Right ventricle myocardium inferior (tissue), 1 donor: ENCODE measurements at regions of chr11 and their contacts with region 1.

Region 1: DNA sequence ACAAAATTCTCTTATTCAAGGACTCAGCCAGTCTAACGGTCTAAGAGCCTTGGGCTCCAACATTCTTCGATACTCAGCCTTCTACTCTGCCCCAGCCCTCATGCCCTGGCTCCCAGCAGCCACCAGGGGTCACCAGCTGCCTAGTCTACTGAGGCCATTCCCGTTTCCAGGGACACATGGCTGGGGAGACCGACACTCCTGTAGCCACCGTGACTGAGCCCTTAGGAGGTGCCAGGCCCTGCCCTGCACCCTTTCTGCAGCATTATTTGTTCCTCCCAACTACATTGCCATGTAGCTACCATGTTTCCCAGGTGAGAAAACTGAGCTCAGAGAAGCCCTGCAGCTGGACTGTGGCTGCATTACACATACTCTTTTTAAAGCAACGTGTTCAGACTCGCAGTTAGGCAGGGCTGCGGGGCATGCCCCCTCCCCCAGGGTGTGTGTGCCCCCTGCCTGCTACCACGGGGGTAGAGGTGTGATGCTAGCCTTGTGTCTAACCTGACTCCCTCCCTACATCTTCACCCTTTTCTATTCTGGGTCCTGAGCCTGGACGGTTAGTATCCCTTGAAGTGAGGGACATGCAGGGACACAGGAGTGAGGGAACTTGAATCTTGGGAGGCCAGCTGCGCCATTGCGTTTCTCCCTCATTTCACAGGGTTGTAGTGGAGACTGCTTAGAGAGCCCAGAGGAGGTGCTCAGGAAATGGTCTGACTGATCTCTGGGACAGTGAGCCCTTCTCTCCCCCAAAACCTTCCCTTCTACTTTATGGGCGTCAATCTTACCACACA is 17.5 kb downstream of the ATG16L2 start:
- DNase-seq: peak; percentile 91
- ATAC-seq: peak; percentile 78

Region 2: DNA sequence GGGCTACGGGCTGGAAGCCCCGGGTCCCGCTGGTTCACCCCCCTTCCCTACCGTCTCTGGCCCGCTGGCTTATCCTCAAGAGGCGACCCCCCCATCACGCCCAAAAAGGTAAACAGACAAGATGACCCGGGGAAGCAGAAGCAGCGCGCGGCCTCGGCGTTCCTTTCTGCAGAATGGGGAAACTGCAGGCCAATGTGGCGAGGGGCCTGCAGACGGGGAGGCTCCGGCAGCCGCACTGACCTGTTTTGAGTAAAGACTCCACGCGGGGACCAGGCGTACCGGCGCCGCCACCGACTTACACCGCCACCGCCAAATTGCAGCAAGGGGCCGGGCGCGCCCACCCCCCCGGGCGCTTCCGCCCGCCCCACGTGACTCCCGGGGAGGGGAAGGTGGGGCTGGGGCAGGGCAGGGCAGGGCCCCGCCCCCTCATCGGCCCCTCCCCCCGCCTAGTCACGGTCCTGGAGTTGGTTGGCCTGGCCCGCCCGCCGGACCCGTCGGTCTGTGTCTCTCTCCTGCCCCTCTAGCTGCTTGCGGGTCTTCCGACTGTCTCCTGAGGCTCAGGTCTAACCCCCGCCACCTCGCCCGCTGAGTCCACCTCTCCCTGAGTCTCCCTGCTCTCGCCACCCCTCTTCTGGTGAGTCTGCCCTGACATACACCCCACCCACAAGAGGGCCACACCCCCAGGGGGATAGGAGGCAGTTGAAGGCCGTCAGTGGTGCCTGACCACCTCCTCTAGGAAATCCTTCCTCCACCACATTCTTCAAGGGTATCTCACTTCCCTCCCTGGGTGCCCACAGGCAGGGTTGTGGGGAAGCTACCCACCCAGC is 79.4 kb before region 1 on chr11 and contains the start of gene ARAP1:
- intact Hi-C with region 1: no loop called
- DNase-seq: peak; percentile 91
- ATAC-seq: peak; percentile 92
- total RNA-seq, gene ARAP1: 55.2 TPM

Region 3: GRCh38 chr11:72848846-72849466 is 17.2 kb after region 1 on chr11:
- intact Hi-C with region 1: loop called (anchors 2 kb)
- DNase-seq: no peak
- ATAC-seq: no peak

Region 4: DNA sequence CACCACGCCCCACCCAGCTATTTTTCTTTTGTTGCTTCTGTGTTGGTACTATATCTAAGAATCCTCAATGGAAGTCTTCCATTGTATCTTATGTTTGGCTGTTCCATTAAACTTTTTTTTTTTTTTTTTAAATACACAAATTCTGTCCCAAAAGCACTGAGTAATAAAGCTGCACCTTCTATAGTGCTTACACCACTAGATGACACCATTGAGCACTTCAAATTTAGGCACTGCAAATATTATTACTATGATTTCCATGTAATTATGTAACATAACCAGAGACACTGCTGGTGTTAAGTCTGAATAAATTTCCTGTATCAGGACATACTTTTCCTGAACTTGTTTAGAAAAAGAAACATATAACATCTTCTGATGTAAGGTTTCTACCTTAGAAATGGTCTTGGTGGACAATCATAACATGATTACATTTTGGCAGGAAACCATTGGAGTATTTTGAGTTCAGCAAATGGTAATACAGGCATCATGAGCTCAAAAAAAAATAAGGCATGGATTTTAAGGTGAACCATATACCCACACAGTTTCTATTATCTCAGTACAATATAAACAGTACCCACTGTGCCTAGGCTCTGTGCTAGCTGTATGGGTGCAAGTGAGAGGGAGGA is 93.0 kb after region 1 on chr11:
- intact Hi-C with region 1: loop called (anchors 5 kb)
- DNase-seq: no peak
- ATAC-seq: peak; percentile 52

Region 5: DNA sequence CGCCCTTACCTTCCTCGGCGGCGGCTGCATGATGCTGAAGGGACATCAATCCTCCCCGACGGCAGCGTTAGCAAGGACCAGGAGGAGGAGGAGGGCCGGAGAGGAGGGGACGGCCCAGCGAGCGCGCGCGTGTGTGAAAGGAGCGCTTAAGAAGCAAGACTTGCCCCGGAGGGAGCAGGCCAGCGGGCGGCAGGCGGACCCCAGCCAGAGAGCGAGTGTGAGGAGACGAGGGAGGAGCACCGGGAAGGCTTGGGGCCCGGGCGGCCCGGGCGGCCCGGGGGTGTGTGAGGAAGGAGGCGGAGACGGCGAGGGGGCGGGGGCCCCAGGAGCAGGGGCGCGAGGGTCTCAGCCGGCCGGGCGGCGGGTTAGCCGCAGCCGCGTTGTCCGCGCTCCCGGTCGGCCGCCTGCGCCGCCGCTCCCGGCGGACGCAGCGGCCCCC is 310.2 kb after region 1 on chr11:
- intact Hi-C with region 1: loop called (anchors 2 kb)
- DNase-seq: peak; percentile 91
- ATAC-seq: peak; percentile 48

Region 6: DNA sequence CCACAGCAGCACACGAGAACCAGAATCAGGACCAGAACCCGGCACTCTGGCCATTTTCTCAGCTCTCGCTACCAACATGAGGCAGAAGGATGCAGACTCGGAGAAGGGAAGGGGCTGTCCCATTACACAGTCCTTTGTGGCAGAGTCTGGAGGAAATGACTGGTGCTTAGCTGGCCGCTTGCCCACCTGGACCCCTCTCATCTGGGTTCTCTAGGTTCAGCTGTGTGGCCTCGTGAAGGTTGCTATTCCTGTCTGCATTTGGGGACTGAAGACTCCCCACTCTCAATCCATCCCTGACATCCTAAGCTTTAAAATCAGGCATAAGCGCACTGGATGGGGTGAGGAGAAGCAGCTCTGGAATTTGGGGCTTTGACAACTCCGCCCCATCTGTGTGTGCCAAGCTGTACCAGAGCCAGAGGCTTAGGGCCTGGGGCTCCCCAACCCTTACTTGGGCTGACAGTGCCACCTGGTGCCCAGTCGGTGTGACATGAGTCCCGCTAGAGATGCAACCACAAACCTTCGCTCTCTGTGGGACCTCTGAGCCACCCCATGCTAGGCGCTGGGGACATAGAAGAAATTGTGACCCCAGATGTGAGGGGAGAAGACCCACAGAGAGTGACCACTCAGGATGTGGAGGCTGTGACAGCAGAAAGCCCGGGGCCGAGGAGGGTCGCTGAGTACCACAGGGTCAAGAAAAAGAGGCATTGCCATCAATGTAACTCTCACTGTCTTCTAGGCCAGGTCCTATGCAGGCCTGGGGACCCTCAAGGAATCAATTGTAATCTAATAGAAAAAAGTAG is 346.3 kb after region 1 on chr11:
- intact Hi-C with region 1: loop called (anchors 2 kb)
- DNase-seq: peak; percentile 91
- ATAC-seq: peak; percentile 69

Region 7: DNA sequence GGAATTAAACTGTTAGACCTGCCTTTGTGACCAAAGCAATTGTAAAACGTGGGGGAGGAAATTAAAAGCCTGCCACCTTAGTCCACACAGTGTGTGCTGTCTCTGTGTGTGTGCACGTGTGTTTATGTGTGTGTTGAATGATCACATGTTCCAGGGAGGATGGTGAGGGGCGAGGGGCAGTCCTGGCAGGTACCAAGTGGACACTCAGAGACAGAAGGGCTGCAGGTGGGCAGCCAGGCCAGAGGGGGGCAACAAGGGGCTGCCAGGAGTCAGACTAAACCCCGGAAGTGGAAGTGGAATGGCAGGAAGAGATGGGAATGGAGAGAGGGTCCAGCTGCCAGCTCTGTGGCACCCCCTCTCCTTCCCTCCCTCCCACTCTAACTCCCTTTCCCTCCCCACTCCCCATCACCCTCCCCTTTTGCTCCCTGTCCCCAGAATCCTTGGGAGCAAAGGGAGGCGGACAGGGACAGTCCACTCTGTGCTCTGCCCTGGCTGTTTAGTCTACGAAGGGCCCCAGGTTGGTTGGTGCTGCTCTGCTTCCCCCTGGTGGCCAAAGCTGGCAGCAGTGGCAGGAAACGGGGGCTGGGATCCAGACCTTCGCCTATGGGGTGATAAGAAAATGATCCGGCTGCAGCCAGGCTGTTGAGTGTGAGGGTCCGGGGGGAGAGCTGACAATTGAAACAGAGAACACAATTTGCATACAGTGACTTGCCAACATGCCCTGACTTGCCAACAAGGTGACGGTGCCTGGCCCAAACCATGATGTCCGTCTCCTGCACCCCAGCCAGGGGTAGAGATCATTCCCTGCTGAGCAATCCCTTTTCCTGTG is 410.8 kb after region 1 on chr11:
- intact Hi-C with region 1: loop called (anchors 2 kb)
- DNase-seq: peak; percentile 86
- ATAC-seq: peak; percentile 59

Region 8: DNA sequence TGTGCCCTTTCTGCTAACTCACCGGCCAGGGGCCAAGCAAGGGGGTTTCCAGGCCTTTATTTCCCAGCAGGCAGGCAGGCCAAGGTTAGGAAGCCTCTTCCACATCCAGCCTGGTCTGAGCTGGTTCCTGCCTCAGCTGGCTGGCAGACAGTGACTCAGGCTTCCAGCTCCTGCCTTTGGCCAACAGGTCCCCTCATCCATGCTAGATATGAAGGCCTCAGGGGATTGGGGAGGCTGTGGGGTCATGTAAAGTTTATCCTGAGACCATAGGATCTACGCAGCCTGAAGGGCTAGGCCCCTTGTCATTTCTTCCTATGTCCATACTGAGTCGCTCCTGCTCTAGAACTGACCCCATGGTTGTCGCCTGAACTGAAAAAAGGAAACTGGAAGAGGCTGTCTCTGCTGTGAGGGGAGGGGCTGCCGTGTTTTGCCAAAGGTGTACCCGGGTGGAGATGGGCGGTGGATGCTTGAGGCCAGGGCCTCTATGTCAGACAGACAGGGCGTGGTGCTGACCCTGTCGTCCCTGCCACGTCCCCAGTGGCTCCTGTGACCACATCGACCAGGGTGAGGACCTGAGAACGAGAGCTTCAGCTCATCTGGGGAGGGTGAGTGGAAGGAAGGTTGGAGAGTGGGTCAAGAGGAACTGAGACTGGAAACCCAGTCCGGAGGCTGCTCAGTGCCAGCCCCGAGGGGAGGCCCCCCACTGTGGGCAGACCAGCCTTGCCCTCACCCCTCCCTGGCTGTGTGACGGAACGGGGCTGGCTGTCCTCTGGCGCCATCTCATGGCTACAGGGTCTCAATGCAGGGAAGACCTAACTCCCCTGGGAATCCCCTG is 457.4 kb after region 1 on chr11:
- intact Hi-C with region 1: loop called (anchors 2 kb)
- DNase-seq: peak; percentile 88
- ATAC-seq: peak; percentile 85